ENCODE measurements at regions of chr13 and their contacts with region 1.

Region 1: GRCh38 chr13:46288570-46289259 is 77.0 kb downstream of the LRRC63 start:
- DNase-seq: peak in 1 of 2 experiments; percentile 61
- H3K4me3 ChIP-seq: no peak overlapping the region
- H3K4me3 Mint-ChIP-seq: no peak overlapping the region
- H3K27ac Mint-ChIP-seq: no peak overlapping the region
- H3K4me1 ChIP-seq: no peaks in the 10 kb centered on the region; the same call in 1 of the 2 replicates
- H3K4me1 Mint-ChIP-seq: no peaks in the 10 kb centered on the region
- H3K27me3 ChIP-seq: no peaks in the 10 kb centered on the region
- H3K27me3 Mint-ChIP-seq: no peaks in the 10 kb centered on the region
- CTCF ChIP-seq: peak; percentile 72 to 87

Region 2: GRCh38 chr13:46146899-46147298 is 141.8 kb before region 1 on chr13:
- CTCF ChIA-PET with region 1: no interaction called
- POLR2A ChIA-PET with region 1: no interaction called
- intact Hi-C with region 1: loop called (anchors 1 kb)
- DNase-seq: peak; percentile 58 to 63
- H3K4me3 ChIP-seq: no peak overlapping the region
- H3K4me3 Mint-ChIP-seq: no peak overlapping the region
- H3K27ac Mint-ChIP-seq: no peak overlapping the region
- H3K4me1 ChIP-seq: peaks cover 32% of the 10 kb centered on the region
- H3K4me1 Mint-ChIP-seq: peaks cover 29% of the 10 kb centered on the region
- H3K27me3 ChIP-seq: no peaks in the 10 kb centered on the region
- H3K27me3 Mint-ChIP-seq: no peaks in the 10 kb centered on the region
- CTCF ChIP-seq: peak; percentile 54 to 59

Region 3: DNA sequence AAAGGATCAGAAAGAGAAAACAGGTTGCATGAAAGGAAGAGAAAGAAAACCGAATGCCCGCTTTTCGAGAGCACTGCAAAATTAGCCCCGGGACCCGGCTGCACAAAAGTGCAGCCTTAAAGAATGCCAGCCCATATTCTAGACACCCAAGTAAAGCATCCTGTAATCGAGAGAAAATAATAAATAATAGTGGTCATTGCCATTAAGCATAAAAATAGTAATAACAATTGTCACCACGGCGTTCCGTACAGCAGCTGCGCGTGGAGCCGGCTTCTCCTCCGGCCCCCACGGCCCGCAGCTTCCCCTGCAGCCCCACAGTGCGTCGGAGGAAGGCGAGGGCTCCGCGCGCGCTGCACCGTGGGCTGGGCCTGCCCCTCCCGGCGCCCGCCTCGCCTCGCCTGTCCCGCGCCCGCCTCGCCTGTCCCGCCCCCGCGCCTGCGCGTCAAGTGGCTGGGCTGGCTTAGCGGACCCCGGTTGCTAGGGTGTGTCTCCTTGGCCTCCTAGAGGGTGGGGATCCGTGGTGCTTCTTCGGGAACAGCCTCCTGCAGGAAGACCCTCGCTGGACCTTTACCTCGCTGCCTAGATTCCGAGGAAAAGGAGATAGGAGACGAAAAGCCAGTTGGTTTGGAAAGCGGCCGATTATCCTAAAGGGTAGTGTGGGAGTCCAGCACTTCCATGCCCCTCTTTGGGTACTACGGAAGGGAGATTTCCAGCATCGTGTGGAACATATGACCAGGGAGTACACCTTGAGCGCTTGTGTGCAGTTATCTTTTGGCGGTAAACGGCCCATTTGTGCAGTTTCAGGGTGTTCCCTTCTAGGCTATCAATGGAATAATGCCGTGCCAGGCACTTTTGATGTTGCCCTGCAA is 77.0 kb before region 1 on chr13 and contains the start of gene LRRC63:
- CTCF ChIA-PET with region 1: no interaction called
- POLR2A ChIA-PET with region 1: no interaction called
- intact Hi-C with region 1: loop called (anchors 2 kb)
- DNase-seq: peak; percentile 87 to 88
- H3K4me3 ChIP-seq: peak within 1 kb of the TSS; percentile 55
- H3K4me3 Mint-ChIP-seq: peak within 1 kb of the TSS; percentile 78
- H3K27ac Mint-ChIP-seq: peak within 1 kb of the TSS; percentile 0
- H3K4me1 ChIP-seq: no peaks in the 10 kb centered on the region
- H3K4me1 Mint-ChIP-seq: peaks cover 7% of the 10 kb centered on the region
- H3K27me3 ChIP-seq: no peaks in the 10 kb centered on the region
- H3K27me3 Mint-ChIP-seq: no peaks in the 10 kb centered on the region
- CTCF ChIP-seq: no peak
- total RNA-seq, gene LRRC63: not detected in 2 replicates

Region 4: GRCh38 chr13:46307554-46307953 is 18.8 kb after region 1 on chr13:
- CTCF ChIA-PET with region 1: no interaction called
- POLR2A ChIA-PET with region 1: no interaction called
- intact Hi-C with region 1: no loop called
- DNase-seq: no peak
- H3K4me3 ChIP-seq: no peak overlapping the region
- H3K4me3 Mint-ChIP-seq: no peak overlapping the region
- H3K27ac Mint-ChIP-seq: no peak overlapping the region
- H3K4me1 ChIP-seq: no peaks in the 10 kb centered on the region
- H3K4me1 Mint-ChIP-seq: no peaks in the 10 kb centered on the region
- H3K27me3 ChIP-seq: no peaks in the 10 kb centered on the region
- H3K27me3 Mint-ChIP-seq: peaks cover 2% of the 10 kb centered on the region
- CTCF ChIP-seq: no peak

Measured in Caco-2 (cell line).